ENCODE measurements at regions of chr3 and their contacts with region 1.

Region 1: GRCh38 chr3:81910244-81910852 is 148.9 kb upstream of the GBE1 start:
- DNase-seq: peak; percentile 7
- H3K4me3 Mint-ChIP-seq: no peak overlapping the region
- H3K27ac Mint-ChIP-seq: no peak overlapping the region
- H3K4me1 Mint-ChIP-seq: no peaks in the 10 kb centered on the region
- H3K27me3 Mint-ChIP-seq: peaks cover 13% of the 10 kb centered on the region

Region 2: DNA sequence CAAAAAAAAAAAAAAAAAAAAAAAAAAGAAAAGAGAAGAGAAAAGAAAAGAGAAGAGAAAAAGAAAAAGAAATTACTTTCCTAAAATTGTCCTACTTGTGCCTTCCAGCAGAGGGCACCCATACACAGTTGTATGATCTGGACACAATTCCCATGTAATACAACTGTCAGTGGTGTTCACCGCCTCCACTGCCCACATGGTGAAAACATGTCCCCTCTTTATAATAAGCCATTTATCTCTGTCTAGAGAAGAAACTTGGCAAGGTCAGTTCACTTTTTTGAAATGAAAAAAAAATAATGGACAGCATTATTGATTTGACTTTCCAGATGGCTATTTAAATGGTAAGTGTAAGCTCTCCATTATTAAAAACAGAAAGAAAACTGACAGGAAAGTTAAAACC is 608.3 kb before region 1 on chr3:
- CTCF ChIA-PET with region 1: no interaction called
- intact Hi-C with region 1: loop called (anchors 10 kb)
- DNase-seq: peak; percentile 26
- H3K4me3 Mint-ChIP-seq: no peak overlapping the region
- H3K27ac Mint-ChIP-seq: no peak overlapping the region
- H3K4me1 Mint-ChIP-seq: no peaks in the 10 kb centered on the region
- H3K27me3 Mint-ChIP-seq: no peaks in the 10 kb centered on the region

Region 3: GRCh38 chr3:81490541-81491288 is 419.6 kb before region 1 on chr3:
- CTCF ChIA-PET with region 1: interaction called, 4 read pairs
- intact Hi-C with region 1: loop called (anchors 1 kb)
- DNase-seq: peak; percentile 89
- H3K4me3 Mint-ChIP-seq: no peak overlapping the region
- H3K27ac Mint-ChIP-seq: no peak overlapping the region
- H3K4me1 Mint-ChIP-seq: no peaks in the 10 kb centered on the region
- H3K27me3 Mint-ChIP-seq: no peaks in the 10 kb centered on the region

Region 4: GRCh38 chr3:81643721-81644120 is 266.6 kb before region 1 on chr3:
- CTCF ChIA-PET with region 1: no interaction called
- intact Hi-C with region 1: no loop called
- DNase-seq: no peak
- H3K4me3 Mint-ChIP-seq: no peak overlapping the region
- H3K27ac Mint-ChIP-seq: no peak overlapping the region
- H3K4me1 Mint-ChIP-seq: no peaks in the 10 kb centered on the region
- H3K27me3 Mint-ChIP-seq: no peaks in the 10 kb centered on the region

Region 5: DNA sequence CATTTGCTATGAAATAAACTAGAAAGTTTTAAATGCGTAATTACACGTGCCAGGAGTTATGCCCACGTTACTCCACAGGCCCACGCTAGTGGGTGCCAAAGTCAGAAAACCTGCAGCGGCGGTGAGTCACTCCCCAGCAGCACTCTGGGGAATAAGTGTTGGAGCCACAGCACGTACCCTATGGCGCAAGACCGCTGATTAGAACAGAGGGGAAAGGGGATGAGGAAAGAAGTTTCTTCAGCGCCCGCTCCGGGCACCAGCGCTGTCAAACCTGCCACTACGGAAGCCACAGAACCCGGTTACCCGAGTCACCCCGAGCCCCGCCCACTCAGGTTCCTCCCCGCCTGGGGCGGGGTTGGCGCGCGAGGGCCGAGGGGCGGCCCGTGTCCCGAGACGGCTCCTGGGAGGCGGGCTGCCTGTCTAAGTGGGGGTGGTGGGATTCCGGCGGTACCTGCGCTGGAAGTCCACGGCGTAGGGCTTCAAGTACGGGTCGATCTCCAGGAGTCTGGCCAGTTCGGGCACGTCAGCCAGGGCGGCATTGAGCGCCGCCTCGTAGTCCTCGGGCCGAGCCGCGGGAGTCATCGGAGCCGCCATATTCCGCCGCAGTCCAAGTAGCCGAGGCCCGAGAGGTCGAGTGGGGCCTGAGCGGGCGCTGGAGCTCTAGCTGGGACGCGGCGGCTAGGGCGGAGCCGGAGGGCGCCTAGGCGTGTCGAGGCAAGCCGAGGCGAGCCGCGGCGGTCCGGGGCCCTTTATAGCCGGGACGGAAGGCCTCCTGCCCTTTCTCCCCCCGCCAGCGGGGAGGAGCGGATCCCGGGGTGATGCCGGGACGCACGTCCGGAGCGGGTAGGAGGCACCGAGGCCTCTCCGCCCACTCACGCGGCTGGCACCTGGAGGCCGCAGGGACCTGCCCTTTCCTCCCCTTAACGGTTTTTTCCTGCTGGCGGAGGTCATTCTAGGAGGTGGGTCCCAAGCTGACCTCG is 149.1 kb before region 1 on chr3 and contains the start of gene GBE1:
- CTCF ChIA-PET with region 1: interaction called, 3 read pairs
- intact Hi-C with region 1: loop called (anchors 5 kb)
- DNase-seq: peak; percentile 87
- H3K4me3 Mint-ChIP-seq: peak within 1 kb of the TSS; percentile 90
- H3K27ac Mint-ChIP-seq: peak within 1 kb of the TSS; percentile 97
- H3K4me1 Mint-ChIP-seq: peaks cover 14% of the 10 kb centered on the region
- H3K27me3 Mint-ChIP-seq: no peaks in the 10 kb centered on the region
- total RNA-seq, gene GBE1: 24.6 to 26.0 TPM

Region 6: DNA sequence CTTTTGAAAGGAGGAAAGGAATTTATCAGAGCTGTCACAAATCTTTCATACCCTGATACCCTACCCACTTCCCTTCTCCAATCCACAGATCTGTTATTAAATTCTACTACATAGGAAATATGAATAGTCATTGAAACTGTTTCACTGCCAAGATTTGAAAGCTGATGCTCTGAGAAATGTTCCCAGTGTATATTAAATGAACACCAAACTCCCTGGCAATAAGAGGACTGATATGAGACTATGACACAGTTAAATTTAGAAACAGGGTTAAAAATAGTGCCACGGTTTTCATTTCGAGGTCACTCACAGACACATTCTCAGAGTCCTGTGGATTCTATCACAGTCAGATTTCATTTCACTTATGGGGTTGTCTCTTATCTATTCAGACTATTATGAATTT is 121.7 kb before region 1 on chr3:
- CTCF ChIA-PET with region 1: no interaction called
- intact Hi-C with region 1: no loop called
- DNase-seq: no peak
- H3K4me3 Mint-ChIP-seq: no peak overlapping the region
- H3K27ac Mint-ChIP-seq: no peak overlapping the region
- H3K4me1 Mint-ChIP-seq: no peaks in the 10 kb centered on the region
- H3K27me3 Mint-ChIP-seq: peaks cover 8% of the 10 kb centered on the region